ENCODE measurements at regions of chr3 and their contacts with region 1.

Region 1: DNA sequence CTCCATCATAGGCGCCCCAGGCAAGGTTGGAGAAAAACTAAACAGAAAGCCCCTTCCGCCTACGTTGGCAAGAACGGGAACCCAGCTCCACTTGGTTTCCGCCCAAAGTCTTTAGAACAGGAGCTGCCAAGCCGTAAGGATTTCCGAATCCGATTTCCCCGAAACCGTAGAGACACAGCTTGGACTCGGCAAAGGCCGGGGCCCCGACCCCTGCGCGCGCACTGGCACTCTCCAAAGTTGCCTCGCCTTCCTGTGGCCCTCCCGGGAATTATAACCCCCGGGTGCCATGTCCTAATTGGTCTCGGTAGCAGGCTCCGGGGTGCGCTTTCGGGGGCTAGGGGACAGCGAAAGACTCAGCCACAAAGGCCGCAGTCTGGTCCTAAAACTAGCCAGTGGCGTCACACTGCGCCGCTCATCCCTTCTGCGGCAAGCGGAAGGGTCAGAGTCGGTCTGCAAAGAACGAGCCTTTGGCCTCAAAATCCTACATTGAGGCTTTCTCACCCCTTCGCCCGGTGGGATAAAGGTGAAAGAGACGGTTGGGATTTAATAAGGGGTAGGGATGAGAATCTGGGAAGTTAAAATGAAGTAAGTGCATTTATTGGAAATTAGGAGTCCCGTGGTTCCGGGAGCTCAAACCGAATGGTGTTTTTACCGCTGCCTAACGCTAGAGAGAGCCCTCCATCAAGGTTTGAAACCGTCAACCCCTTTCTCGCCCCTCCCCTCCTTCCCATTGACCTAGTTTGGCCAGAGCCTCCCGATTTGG is 6.8 kb downstream of the BCL6 start:
- DNase-seq: peak; percentile 75 to 95 (median 93)
- ATAC-seq: peak; percentile 65 to 78 (median 72)
- H3K4me3 ChIP-seq: peak overlapping the region; percentile 15 to 89 (median 72)
- H3K27ac ChIP-seq: peak overlapping the region; percentile 94 to 100 (median 98)
- H3K4me1 ChIP-seq: peaks cover 0 to 58% (median 36%) of the 10 kb centered on the region in 12 donors
- H3K27me3 ChIP-seq: no peaks in the 10 kb centered on the region
- CTCF ChIP-seq: peak; percentile 50 to 88 (median 74)
- POLR2A ChIP-seq: peak in 1 of 2 donors; percentile 45

Region 2: GRCh38 chr3:188262913-188263683 is 524.6 kb after region 1 on chr3:
- intact Hi-C with region 1: loop called in 8 of 10 experiments (anchors 5 to 10 kb)
- DNase-seq: peak in 4 of 5 donors; percentile 47 to 60 (median 50)
- ATAC-seq: peak; percentile 79 to 88 (median 86)
- H3K4me3 ChIP-seq: no peak overlapping the region
- H3K27ac ChIP-seq: peak overlapping the region; percentile 74 to 96 (median 89)
- H3K4me1 ChIP-seq: peaks cover 2 to 94% (median 64%) of the 10 kb centered on the region in 12 donors
- H3K27me3 ChIP-seq: no peaks in the 10 kb centered on the region
- CTCF ChIP-seq: peak in 1 of 12 donors; percentile 7
- POLR2A ChIP-seq: no peak

Region 3: DNA sequence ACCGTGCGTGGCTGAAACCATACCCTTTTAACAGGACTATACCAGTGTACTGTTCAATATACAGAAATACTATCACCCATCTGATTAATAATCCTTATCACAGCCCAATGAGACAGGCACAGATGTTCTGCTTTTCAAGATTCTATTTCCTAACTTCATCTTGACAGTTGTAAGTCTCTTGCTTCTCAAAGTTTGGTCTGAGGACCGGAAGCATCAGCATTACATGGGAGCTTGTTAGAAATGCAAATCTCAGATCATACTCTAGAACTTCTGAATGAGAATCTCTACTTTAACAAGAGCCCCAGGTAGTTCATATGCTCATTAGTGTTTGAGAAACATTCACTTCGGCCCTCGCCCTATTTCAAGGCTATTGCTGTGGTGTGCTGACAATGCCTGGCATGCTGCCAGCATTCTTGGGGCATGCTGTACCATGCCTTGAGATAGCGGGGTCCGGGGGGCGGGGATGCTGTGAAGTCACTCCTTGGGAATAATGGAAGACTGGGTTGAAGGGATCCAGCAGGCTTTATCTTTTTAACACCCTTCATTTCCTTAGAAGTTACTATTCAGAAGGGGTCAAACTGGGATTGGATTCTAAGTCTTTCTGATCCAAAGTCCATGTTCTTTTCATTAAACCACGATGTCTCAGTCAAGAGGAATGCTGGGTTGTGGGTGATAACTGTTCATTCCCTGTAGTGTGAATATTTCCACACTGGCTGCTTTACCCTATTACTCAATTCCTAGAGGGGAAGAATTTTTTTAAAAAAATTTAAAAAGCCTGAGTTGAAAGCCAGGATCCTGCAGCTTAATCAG is 610.1 kb after region 1 on chr3:
- intact Hi-C with region 1: loop called in 5 of 10 experiments (anchors 5 to 10 kb)
- DNase-seq: peak; percentile 66 to 91 (median 84)
- ATAC-seq: peak; percentile 67 to 77 (median 74)
- H3K4me3 ChIP-seq: no peak overlapping the region
- H3K27ac ChIP-seq: peak overlapping the region; percentile 41 to 77 (median 64)
- H3K4me1 ChIP-seq: peaks cover 6 to 65% (median 41%) of the 10 kb centered on the region in 12 donors
- H3K27me3 ChIP-seq: no peaks in the 10 kb centered on the region
- CTCF ChIP-seq: no peak
- POLR2A ChIP-seq: no peak

Region 4: DNA sequence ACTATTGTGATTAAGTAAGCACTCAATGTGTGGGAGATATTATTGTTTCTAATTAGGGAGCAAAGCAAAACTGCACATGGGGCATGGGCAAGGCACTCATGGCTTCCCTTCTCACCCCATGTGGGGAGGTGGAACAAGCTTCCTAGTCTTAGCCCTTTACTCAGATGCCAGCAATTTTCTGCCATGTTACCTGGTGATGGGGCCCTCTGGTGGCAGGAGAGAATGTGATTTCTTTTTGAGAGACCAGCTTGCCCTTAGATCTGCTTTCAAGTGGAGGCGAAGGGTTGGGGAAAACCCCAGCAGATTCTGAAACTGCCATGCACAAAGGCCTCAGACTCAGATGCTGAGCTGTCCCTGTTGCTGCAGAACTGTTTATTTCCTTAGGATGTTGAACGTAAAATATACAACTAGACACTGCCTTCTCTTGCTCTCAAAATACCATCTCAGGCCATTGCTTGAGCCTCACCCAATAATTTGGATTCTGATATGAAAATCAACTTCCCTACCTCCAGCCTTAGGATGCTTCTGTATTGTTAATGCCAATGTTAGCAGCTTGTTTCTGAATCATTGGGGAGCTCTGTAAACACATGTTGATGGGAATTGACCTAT is 1303.1 kb after region 1 on chr3:
- intact Hi-C with region 1: loop called in 1 of 10 experiments (anchors 10 kb)
- DNase-seq: peak in 4 of 5 donors; percentile 10 to 33 (median 23)
- ATAC-seq: peak in 2 of 4 donors; percentile 7 to 39
- H3K4me3 ChIP-seq: no peak overlapping the region
- H3K27ac ChIP-seq: no peak overlapping the region
- H3K4me1 ChIP-seq: peaks cover 0 to 15% (median 0%) of the 10 kb centered on the region in 12 donors
- H3K27me3 ChIP-seq: no peaks in the 10 kb centered on the region
- CTCF ChIP-seq: peak in 10 of 12 donors; percentile 25 to 51 (median 40)
- POLR2A ChIP-seq: no peak

Region 5: GRCh38 chr3:189233225-189233858 is 1494.8 kb after region 1 on chr3:
- intact Hi-C with region 1: loop called in 5 of 10 experiments (anchors 2 to 10 kb)
- DNase-seq: peak in 4 of 5 donors; percentile 33 to 66 (median 52)
- ATAC-seq: peak; percentile 61 to 88 (median 82)
- H3K4me3 ChIP-seq: no peak overlapping the region
- H3K27ac ChIP-seq: no peak overlapping the region
- H3K4me1 ChIP-seq: peaks cover 0 to 12% (median 0%) of the 10 kb centered on the region in 12 donors
- H3K27me3 ChIP-seq: no peaks in the 10 kb centered on the region
- CTCF ChIP-seq: peak; percentile 45 to 70 (median 57)
- POLR2A ChIP-seq: no peak

Measured in heart left ventricle (tissue), 16 donors.